Activated CD4-positive, alpha-beta memory T cell treated with anti-CD3 and anti-CD28 coated beads for 36 hours (primary cell): ENCODE measurements at regions of chr2 and their contacts with region 1.

Region 1: DNA sequence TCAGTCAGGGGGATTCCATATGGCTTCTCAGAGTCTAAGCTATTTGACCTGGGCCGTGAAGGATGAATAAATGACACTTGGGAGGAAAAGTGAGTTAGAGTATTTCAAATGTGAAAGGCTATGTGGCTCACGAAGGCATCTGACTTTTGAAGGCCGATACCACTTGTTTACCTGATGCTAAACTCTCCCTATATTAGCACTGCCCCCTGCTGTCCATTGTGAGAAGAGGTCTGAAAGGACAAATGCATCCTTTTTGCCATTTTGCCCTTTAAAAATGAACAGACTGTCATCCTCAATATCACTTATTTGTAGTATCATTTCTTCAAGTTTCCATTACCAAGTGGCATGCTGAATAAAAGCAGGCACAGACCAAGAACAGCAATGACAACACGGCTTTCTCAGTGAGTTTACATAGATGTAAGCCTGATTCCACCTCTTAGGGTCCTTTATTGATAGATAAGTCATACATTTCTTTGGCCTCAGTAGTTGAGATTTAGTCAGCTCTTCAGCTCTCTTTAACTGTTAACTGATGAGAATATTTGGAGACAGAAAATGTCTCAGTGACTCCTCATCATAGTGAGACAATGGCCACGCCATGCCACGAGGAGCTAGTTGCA is 40.1 kb downstream of the DOCK10 start:
- DNase-seq: peak; percentile 65
- H3K4me3 Mint-ChIP-seq: no peak overlapping the region
- H3K27ac Mint-ChIP-seq: peak overlapping the region; percentile 74
- H3K4me1 Mint-ChIP-seq: peaks cover 82% of the 10 kb centered on the region
- H3K27me3 Mint-ChIP-seq: no peaks in the 10 kb centered on the region

Region 2: DNA sequence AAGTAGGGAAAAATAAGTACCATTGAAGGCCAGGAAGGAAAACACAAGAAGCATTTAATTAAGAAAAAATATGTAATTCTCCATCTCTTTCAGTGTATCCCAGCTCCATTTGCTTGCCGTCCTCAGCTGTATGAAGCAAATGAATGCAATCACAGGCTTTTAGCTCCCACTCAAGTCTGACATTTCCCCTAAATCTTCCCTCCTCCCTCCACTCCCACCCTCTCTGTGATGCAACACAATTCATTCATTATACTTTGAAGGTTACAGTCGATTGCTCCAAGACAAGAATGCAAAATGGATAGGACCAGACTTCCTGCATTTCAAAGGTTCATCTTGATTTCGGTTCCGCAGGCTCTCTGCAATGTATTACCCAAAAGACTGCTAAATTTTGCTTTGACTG is 790.4 kb before region 1 on chr2:
- CTCF ChIA-PET with region 1: no interaction called
- POLR2A ChIA-PET with region 1: no interaction called
- intact Hi-C with region 1: no loop called
- DNase-seq: no peak
- H3K4me3 Mint-ChIP-seq: no peak overlapping the region
- H3K27ac Mint-ChIP-seq: no peak overlapping the region
- H3K4me1 Mint-ChIP-seq: no peaks in the 10 kb centered on the region
- H3K27me3 Mint-ChIP-seq: peaks cover 5% of the 10 kb centered on the region

Region 3: DNA sequence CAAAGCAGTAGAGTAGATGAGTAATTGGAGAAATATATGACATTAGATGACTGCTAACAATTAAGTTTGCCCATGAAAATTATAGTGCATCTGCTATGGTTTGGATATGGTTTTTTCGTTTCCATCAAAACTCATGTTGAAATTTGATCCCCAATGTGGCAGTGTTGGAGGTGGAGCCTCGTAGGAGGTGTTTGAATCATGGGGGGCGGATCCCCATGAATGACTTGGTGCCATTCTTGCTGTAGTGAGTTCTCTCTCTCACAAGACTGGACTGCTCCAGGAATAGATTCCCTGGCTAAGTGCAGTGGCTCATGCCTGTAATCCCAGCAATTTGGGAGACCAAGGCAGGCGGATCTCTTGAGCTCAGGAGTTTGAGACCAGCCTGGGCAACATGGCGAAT is 407.3 kb before region 1 on chr2:
- CTCF ChIA-PET with region 1: no interaction called
- POLR2A ChIA-PET with region 1: no interaction called
- intact Hi-C with region 1: no loop called
- DNase-seq: no peak
- H3K4me3 Mint-ChIP-seq: no peak overlapping the region
- H3K27ac Mint-ChIP-seq: no peak overlapping the region
- H3K4me1 Mint-ChIP-seq: no peaks in the 10 kb centered on the region
- H3K27me3 Mint-ChIP-seq: peaks cover 4% of the 10 kb centered on the region

Region 4: DNA sequence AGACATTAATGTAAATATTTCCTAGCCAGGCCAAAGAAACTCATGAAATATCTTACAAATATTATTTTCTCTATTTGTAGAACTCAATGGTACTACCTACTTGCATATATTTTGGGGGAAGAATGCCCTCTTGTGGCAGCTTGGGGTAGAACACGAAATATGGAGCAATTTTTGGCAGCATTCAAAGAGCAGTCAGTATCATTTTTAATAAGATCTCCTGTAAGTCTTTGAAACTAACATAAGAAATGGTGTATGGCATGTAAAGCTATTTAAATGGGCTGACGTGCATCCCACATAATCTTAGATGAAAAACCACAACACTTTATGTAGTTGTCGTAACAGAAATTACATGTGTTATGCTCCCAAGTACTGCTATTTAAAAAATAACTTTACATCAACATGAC is 223.7 kb before region 1 on chr2:
- CTCF ChIA-PET with region 1: no interaction called
- POLR2A ChIA-PET with region 1: no interaction called
- intact Hi-C with region 1: loop called (anchors 2 kb)
- DNase-seq: peak; percentile 76
- H3K4me3 Mint-ChIP-seq: no peak overlapping the region
- H3K27ac Mint-ChIP-seq: peak overlapping the region; percentile 33
- H3K4me1 Mint-ChIP-seq: peaks cover 3% of the 10 kb centered on the region
- H3K27me3 Mint-ChIP-seq: no peaks in the 10 kb centered on the region

Region 5: GRCh38 chr2:224885836-224886547 is 116.2 kb before region 1 on chr2:
- CTCF ChIA-PET with region 1: interaction called, 6 read pairs
- POLR2A ChIA-PET with region 1: no interaction called
- intact Hi-C with region 1: loop called (anchors 1 kb)
- DNase-seq: peak; percentile 15
- H3K4me3 Mint-ChIP-seq: no peak overlapping the region
- H3K27ac Mint-ChIP-seq: peak overlapping the region; percentile 82
- H3K4me1 Mint-ChIP-seq: peaks cover 72% of the 10 kb centered on the region
- H3K27me3 Mint-ChIP-seq: no peaks in the 10 kb centered on the region

Region 6: GRCh38 chr2:224946895-224947294 is 55.3 kb before region 1 on chr2:
- CTCF ChIA-PET with region 1: interaction called, 19 read pairs
- POLR2A ChIA-PET with region 1: interaction called, 3 read pairs
- intact Hi-C with region 1: loop called (anchors 1 kb)
- DNase-seq: no peak
- H3K4me3 Mint-ChIP-seq: peak overlapping the region; percentile 90
- H3K27ac Mint-ChIP-seq: peak overlapping the region; percentile 95
- H3K4me1 Mint-ChIP-seq: peaks cover 65% of the 10 kb centered on the region
- H3K27me3 Mint-ChIP-seq: no peaks in the 10 kb centered on the region

Region 7: GRCh38 chr2:225020168-225020849 is 18.2 kb after region 1 on chr2:
- CTCF ChIA-PET with region 1: interaction called, 11 read pairs
- POLR2A ChIA-PET with region 1: no interaction called
- intact Hi-C with region 1: no loop called
- DNase-seq: no peak
- H3K4me3 Mint-ChIP-seq: no peak overlapping the region
- H3K27ac Mint-ChIP-seq: peak overlapping the region; percentile 18
- H3K4me1 Mint-ChIP-seq: peaks cover 74% of the 10 kb centered on the region
- H3K27me3 Mint-ChIP-seq: no peaks in the 10 kb centered on the region

Region 8: GRCh38 chr2:225660262-225661131 is 658.4 kb after region 1 on chr2:
- CTCF ChIA-PET with region 1: interaction called, 3 read pairs
- POLR2A ChIA-PET with region 1: no interaction called
- intact Hi-C with region 1: loop called (anchors 1 kb)
- DNase-seq: peak; percentile 83
- H3K4me3 Mint-ChIP-seq: no peak overlapping the region
- H3K27ac Mint-ChIP-seq: no peak overlapping the region
- H3K4me1 Mint-ChIP-seq: no peaks in the 10 kb centered on the region
- H3K27me3 Mint-ChIP-seq: peaks cover 14% of the 10 kb centered on the region

Region 9: GRCh38 chr2:225725726-225726125 is 723.6 kb after region 1 on chr2:
- CTCF ChIA-PET with region 1: no interaction called
- POLR2A ChIA-PET with region 1: no interaction called
- intact Hi-C with region 1: no loop called
- DNase-seq: no peak
- H3K4me3 Mint-ChIP-seq: no peak overlapping the region
- H3K27ac Mint-ChIP-seq: no peak overlapping the region
- H3K4me1 Mint-ChIP-seq: no peaks in the 10 kb centered on the region
- H3K27me3 Mint-ChIP-seq: no peaks in the 10 kb centered on the region